CD8-positive, alpha-beta T cell (primary cell): ENCODE measurements at regions of chr3 and their contacts with region 1.

Region 1: DNA sequence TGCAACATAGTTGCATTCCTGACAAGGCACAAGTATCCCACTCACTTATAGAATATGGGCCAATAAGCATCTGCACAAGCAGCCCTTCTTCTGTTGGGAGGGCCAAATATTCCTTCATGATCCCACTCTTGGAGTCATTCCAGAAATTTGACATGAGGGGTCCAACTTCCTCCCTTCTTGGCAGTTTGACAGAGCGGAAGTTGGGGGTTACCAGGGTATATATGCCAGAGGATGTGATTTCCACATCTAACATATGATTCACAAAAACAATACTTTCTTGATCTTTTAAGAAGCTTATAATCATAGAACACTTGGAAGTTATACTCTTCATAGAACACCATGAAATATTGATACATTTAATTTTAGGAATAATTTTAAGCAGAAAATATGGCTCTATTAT is 100.9 kb upstream of the CRBN start:
- DNase-seq: peak in 1 of 9 experiments; percentile 1
- ATAC-seq: no peak
- H3K4me3 ChIP-seq: no peak overlapping the region
- H3K4me3 Mint-ChIP-seq: no peak overlapping the region
- H3K27ac ChIP-seq: no peak overlapping the region
- H3K27ac Mint-ChIP-seq: no peak overlapping the region
- H3K4me1 ChIP-seq: peaks cover 11% of the 10 kb centered on the region
- H3K4me1 Mint-ChIP-seq: peaks cover 10% of the 10 kb centered on the region
- H3K27me3 ChIP-seq: no peaks in the 10 kb centered on the region
- H3K27me3 Mint-ChIP-seq: no peaks in the 10 kb centered on the region
- CTCF ChIP-seq: no peak

Region 2: DNA sequence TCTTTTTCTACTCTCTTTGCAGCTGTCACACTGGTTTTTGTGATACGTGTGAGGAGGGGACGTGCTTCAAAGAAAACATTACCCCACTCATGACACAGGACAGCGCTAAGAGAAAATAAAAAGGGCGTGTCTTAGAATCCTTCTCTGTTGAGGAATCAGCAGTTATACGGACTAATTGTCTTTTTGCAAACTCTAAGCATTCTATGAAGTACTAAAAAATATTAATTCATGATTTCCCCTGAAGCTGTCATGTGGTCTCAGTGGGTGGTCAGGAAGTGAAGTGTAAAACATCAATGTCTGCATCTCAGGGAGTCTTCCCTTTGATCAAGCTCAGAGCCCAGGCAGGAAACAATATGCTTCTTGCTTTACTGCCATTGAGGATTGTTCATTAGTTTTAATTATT is 16.6 kb after region 1 on chr3:
- CTCF ChIA-PET with region 1: no interaction called
- POLR2A ChIA-PET with region 1: no interaction called
- intact Hi-C with region 1: loop called in 1 of 2 experiments (anchors 1 kb)
- DNase-seq: peak in 2 of 9 experiments; percentile 15 to 51
- ATAC-seq: peak; percentile 68
- H3K4me3 ChIP-seq: peak overlapping the region in 1 of 2 experiments; percentile 4
- H3K4me3 Mint-ChIP-seq: peak overlapping the region; percentile 72
- H3K27ac ChIP-seq: no peak overlapping the region
- H3K27ac Mint-ChIP-seq: peak overlapping the region; percentile 65
- H3K4me1 ChIP-seq: peaks cover 11% of the 10 kb centered on the region
- H3K4me1 Mint-ChIP-seq: peaks cover 22% of the 10 kb centered on the region
- H3K27me3 ChIP-seq: peaks cover 0 to 2% of the 10 kb centered on the region in 2 experiments
- H3K27me3 Mint-ChIP-seq: no peaks in the 10 kb centered on the region
- CTCF ChIP-seq: no peak